ENCODE measurements at regions of chrX and their contacts with region 1.

Region 1: GRCh38 chrX:8815464-8816065 is 14.4 kb upstream of the FAM9A start:
- DNase-seq: no peak
- H3K4me3 ChIP-seq: no peak overlapping the region
- CTCF ChIP-seq: peak; percentile 58

Region 2: DNA sequence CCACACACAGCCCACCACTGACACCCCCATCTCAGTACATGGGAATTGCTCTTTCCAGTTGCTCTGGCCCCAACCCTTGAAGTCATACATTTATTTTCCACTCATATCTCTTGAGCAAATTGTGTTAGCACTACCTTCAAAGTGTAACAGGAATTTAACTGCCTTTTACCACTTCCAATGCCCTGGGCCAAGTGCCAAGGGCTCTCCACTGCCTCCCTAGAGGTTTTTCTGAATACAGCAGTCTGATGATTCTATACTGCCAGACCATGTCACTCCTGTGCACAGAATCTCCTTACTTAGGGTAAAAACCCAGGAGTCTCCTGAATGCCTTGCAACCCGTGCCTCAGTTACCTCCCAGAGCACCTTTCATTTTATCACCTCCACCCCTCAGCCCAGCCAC is 241.8 kb before region 1 on chrX:
- CTCF ChIA-PET with region 1: no interaction called
- POLR2A ChIA-PET with region 1: no interaction called
- DNase-seq: no peak
- H3K4me3 ChIP-seq: no peak overlapping the region
- CTCF ChIP-seq: no peak

Region 3: DNA sequence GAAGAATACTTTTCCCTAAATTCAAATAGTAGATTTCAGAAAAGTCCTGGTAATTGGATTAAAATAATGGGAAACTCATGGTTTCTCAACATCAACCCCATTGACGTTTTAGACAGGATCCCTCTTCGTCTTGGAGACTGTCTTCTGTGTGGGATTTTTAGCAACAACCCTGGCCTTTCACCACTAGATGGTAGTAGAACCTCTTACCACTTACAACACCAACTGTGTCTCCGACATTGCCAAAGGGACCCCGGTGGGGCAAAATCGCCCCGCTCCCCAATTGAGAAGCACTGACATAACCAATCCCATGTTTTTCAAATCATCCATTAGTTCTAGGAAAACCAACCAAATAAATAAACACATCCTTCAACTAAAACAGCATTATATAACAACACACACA is 66.7 kb before region 1 on chrX:
- CTCF ChIA-PET with region 1: interaction called, 152 read pairs
- POLR2A ChIA-PET with region 1: no interaction called
- DNase-seq: no peak
- H3K4me3 ChIP-seq: no peak overlapping the region
- CTCF ChIP-seq: peak; percentile 38

Region 4: GRCh38 chrX:9708904-9709553 is 893.5 kb after region 1 on chrX:
- CTCF ChIA-PET with region 1: interaction called, 16 read pairs
- POLR2A ChIA-PET with region 1: no interaction called
- DNase-seq: peak; percentile 5
- H3K4me3 ChIP-seq: no peak overlapping the region
- CTCF ChIP-seq: peak; percentile 70

Measured in AG04449 (cell line).